SK-N-SH (cell line): ENCODE measurements at regions of chr2 and their contacts with region 1.

Region 1: GRCh38 chr2:215949991-215950404 is 63.4 kb downstream of the MREG start:
- DNase-seq: peak; percentile 32
- H3K4me3 ChIP-seq: no peak overlapping the region
- H3K27ac ChIP-seq: no peak overlapping the region
- H3K4me1 ChIP-seq: peaks cover 0 to 2% of the 10 kb centered on the region in 2 experiments; a peak in 2 of 4 replicates
- H3K27me3 ChIP-seq: no peaks in the 10 kb centered on the region
- CTCF ChIP-seq: peak; percentile 63
- EP300 ChIP-seq: no peak
- RAD21 ChIP-seq: peak; percentile 66

Region 2: DNA sequence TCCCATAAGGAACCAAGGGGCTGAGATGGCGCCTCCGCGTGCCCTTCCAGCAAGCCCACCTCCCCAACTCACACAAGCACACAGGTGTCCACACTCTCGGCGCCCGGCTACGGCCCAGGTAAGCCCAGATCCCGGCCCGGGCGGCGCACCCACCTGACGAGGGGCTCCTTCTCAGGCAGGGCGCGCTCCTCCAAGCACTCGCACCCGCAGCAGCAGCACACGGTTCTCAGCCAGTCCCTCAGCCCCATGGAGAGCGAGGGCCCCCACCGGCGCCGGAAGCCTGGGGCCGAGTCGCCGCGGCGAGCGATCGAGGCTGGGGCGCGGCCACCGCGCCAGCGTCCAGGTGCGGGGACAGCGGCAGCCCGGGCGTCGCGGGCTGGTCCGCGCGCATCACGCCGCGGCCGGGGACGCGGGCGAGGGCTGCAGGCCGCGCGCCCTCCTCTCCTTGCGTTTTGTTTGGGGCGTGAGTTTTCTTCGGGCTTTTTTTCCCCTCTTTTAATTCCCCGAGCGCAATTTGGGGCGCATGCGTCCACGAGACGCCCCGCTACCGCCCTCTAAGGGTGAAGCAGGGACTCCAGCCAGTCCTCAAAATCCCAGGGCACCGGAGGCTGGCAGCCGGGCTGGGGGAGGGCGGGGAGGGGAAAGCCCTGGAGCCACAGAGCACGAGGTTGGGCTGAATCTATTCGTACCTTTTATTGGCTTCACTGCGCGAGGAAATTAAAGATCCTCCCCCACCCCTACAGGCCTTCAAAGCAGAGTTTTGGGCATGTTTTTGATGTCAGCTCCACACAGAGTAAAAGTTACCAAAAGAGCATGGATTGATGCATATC is 63.3 kb after region 1 on chr2 and contains the start of gene MREG:
- CTCF ChIA-PET with region 1: interaction called, 15 read pairs
- POLR2A ChIA-PET with region 1: no interaction called
- DNase-seq: peak; percentile 98
- H3K4me3 ChIP-seq: peak within 1 kb of the TSS; percentile 89 to 97
- H3K27ac ChIP-seq: peak within 1 kb of the TSS; percentile 54 to 58; a peak in 3 of 4 replicates
- H3K4me1 ChIP-seq: peaks cover 0 to 14% of the 10 kb centered on the region in 2 experiments; a peak in 3 of 4 replicates
- H3K27me3 ChIP-seq: no peaks in the 10 kb centered on the region
- CTCF ChIP-seq: peak; percentile 63
- EP300 ChIP-seq: no peak
- RAD21 ChIP-seq: peak; percentile 10; the same call in 1 of the 2 replicates
- polyA plus RNA-seq, gene MREG: 2.5 and 3.5 TPM in 2 replicates

Region 3: DNA sequence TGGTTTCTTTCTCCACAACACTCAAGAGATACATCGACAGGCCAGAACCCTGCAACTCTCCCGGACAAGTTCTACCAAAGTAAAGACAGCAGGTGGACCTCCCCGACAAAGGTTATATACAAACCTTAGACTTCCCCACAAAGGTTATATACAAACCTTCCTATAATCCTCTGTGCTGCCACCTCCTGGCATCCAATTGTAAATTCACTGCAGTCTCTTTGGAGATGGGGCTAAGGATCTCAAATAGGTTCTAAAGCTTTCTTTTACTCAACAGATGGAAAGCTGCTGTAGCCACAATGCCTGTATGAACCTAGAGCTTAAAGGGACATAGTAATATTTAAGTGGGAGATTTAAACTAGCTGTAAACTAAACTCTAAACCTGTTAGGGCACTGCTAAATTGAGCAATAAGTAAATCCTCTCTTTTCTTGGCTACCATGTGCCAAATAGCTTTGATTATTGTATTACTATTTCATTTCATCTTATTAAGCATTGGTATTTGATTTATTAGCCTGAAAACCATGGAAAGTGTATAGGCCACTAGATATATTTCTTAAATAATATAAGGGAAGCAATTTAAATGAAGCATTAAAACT is 73.2 kb after region 1 on chr2:
- CTCF ChIA-PET with region 1: interaction called, 47 read pairs
- POLR2A ChIA-PET with region 1: no interaction called
- DNase-seq: peak; percentile 72
- H3K4me3 ChIP-seq: no peak overlapping the region
- H3K27ac ChIP-seq: no peak overlapping the region
- H3K4me1 ChIP-seq: no peaks in the 10 kb centered on the region
- H3K27me3 ChIP-seq: no peaks in the 10 kb centered on the region
- CTCF ChIP-seq: peak; percentile 76
- EP300 ChIP-seq: no peak
- RAD21 ChIP-seq: peak; percentile 64

Region 4: GRCh38 chr2:216205486-216205885 is 255.5 kb after region 1 on chr2:
- CTCF ChIA-PET with region 1: no interaction called
- POLR2A ChIA-PET with region 1: no interaction called
- DNase-seq: no peak
- H3K4me3 ChIP-seq: no peak overlapping the region
- H3K27ac ChIP-seq: no peak overlapping the region; a peak in 1 of 4 replicates
- H3K4me1 ChIP-seq: peaks cover 0 to 37% of the 10 kb centered on the region in 2 experiments; a peak in 2 of 4 replicates
- H3K27me3 ChIP-seq: no peaks in the 10 kb centered on the region
- CTCF ChIP-seq: no peak
- EP300 ChIP-seq: no peak
- RAD21 ChIP-seq: no peak